ENCODE measurements at regions of chr1 and their contacts with region 1.

Region 1: GRCh38 chr1:7646981-7647901 is 123.9 kb upstream of the VAMP3 start:
- DNase-seq: peak; percentile 94
- H3K4me3 ChIP-seq: no peak overlapping the region; a peak in 1 of 4 replicates
- H3K27ac ChIP-seq: peak overlapping the region in 1 of 2 experiments; percentile 85; a peak in 2 of 4 replicates
- H3K4me1 ChIP-seq: peaks cover 0 to 39% of the 10 kb centered on the region in 2 experiments; a peak in 1 of 4 replicates
- H3K27me3 ChIP-seq: no peaks in the 10 kb centered on the region
- CTCF ChIP-seq: peak; percentile 88
- EP300 ChIP-seq: no peak
- RAD21 ChIP-seq: peak; percentile 95

Region 2: DNA sequence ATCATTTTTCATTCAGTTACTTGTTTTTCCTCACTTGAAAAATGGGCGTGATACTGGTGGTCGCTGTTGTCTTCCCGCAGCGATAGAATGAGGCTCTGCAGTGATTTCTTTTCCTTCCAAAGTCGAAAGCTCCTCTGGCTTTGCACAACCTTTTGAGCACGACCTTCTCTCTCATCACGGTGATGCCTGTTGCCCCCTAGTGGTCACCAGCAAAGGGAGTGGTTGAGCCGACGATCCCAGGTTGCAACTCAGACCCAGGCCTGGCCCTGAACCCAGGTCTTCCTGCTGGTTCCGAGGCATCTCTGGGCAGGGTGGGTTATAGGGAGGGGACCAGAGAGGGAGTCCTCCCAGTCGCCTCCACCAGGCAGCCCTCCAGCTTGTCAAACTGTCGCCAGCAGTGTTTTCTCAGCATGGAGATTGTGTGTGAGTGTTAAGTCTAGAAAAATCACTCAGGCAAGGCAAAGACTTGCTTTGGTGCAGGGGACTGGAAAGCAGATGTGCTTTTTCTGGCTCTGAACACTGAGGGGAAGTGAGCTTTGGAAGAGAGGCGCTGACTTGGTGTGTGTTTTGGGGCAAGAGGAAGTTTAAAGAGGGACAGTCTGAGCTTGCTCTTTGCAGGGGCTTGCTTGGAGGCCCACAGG is 576.7 kb before region 1 on chr1:
- CTCF ChIA-PET with region 1: interaction called, 22 read pairs
- POLR2A ChIA-PET with region 1: no interaction called
- DNase-seq: peak; percentile 87
- H3K4me3 ChIP-seq: no peak overlapping the region; a peak in 1 of 4 replicates
- H3K27ac ChIP-seq: no peak overlapping the region
- H3K4me1 ChIP-seq: no peaks in the 10 kb centered on the region; a peak in 1 of 4 replicates
- H3K27me3 ChIP-seq: no peaks in the 10 kb centered on the region
- CTCF ChIP-seq: peak; percentile 72
- EP300 ChIP-seq: no peak
- RAD21 ChIP-seq: peak; percentile 84

Region 3: GRCh38 chr1:7485086-7485780 is 162.0 kb before region 1 on chr1:
- CTCF ChIA-PET with region 1: interaction called, 11 read pairs
- POLR2A ChIA-PET with region 1: no interaction called
- DNase-seq: no peak
- H3K4me3 ChIP-seq: no peak overlapping the region
- H3K27ac ChIP-seq: peak overlapping the region in 1 of 2 experiments; percentile 47; a peak in 1 of 4 replicates
- H3K4me1 ChIP-seq: peaks cover 0 to 50% of the 10 kb centered on the region in 2 experiments; a peak in 1 of 4 replicates
- H3K27me3 ChIP-seq: no peaks in the 10 kb centered on the region
- CTCF ChIP-seq: no peak
- EP300 ChIP-seq: no peak
- RAD21 ChIP-seq: no peak

Region 4: GRCh38 chr1:7554385-7555235 is 92.6 kb before region 1 on chr1:
- CTCF ChIA-PET with region 1: interaction called, 18 read pairs
- POLR2A ChIA-PET with region 1: interaction called, 5 read pairs
- DNase-seq: no peak
- H3K4me3 ChIP-seq: no peak overlapping the region
- H3K27ac ChIP-seq: peak overlapping the region in 1 of 2 experiments; percentile 100; a peak in 2 of 4 replicates
- H3K4me1 ChIP-seq: peaks cover 6 to 83% of the 10 kb centered on the region in 2 experiments; a peak in 3 of 4 replicates
- H3K27me3 ChIP-seq: no peaks in the 10 kb centered on the region
- CTCF ChIP-seq: no peak
- EP300 ChIP-seq: no peak
- RAD21 ChIP-seq: no peak

Region 5: DNA sequence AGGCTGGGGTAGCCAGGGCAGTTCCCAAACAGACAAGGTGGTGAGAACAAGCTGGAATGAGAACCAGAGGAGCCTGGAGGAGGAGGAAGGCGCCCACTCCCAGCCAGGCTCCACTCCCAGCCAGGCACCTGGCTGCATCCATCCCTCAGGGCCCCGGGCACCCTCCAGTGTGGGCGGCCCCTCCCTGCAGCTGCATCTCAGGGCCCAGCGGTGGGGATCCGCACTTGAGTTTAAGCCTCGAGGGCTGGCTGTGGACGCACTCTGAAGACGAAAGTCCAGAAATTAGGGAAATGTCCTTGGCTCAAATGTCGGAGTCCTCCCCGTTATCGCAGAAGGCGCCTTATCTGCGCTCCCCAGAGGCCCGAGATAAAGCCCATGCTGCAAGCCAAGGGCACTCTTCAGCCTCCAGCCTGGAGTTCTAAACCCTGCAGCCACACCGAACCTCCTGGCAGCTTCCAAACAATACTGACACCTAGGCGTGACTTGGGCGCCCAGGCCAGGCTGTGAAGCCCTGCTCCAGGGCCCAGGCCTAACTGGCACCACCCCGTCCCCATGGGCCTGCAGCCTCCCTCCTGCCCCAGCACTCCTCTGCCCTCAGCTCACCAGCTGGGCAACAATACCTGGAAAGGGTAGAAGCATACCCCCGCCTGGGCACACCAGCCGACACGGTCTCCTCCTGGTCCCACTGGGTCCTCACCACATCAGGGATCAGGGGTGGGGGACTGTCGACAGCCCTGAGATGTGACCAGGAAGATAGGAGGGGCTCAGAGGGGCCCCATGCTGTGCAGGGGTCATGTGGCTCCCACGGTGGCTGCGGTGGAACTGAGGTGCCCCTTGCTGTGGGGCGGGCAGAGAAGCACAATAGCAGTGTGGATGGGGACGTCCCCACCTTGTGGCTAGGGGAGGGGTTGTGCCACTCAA is 61.0 kb before region 1 on chr1:
- CTCF ChIA-PET with region 1: interaction called, 20 read pairs
- POLR2A ChIA-PET with region 1: interaction called, 5 read pairs
- DNase-seq: peak; percentile 61
- H3K4me3 ChIP-seq: no peak overlapping the region; a peak in 1 of 4 replicates
- H3K27ac ChIP-seq: peak overlapping the region in 1 of 2 experiments; percentile 99; a peak in 2 of 4 replicates
- H3K4me1 ChIP-seq: peaks cover 0 to 98% of the 10 kb centered on the region in 2 experiments; a peak in 2 of 4 replicates
- H3K27me3 ChIP-seq: no peaks in the 10 kb centered on the region
- CTCF ChIP-seq: no peak
- EP300 ChIP-seq: peak in 1 of 2 experiments; percentile 33; a peak in 1 of 4 replicates
- RAD21 ChIP-seq: no peak

Region 6: DNA sequence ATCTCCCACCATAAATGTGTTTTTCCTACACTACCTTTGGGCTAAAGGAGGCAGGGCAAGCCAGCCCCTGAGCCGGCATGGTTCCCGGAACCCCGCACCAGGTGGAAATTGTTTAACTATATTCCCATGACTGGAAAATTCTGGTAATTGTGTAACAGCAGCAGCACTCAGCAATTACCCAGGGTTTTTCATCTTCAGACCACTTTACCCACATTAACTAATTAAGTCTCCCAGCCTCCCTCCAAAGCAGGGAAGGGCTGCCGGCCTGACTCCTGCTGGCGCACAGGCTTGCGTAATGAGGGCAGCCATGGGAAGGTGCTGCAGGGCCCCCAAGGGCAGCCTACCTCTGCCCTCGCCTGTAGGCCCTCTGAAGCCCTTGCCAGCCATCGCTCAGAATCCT is 16.9 kb before region 1 on chr1:
- CTCF ChIA-PET with region 1: interaction called, 12 read pairs
- POLR2A ChIA-PET with region 1: interaction called, 4 read pairs
- DNase-seq: peak; percentile 90
- H3K4me3 ChIP-seq: no peak overlapping the region
- H3K27ac ChIP-seq: peak overlapping the region; percentile 32 to 100; a peak in 3 of 4 replicates
- H3K4me1 ChIP-seq: peaks cover 0 to 89% of the 10 kb centered on the region in 2 experiments; a peak in 2 of 4 replicates
- H3K27me3 ChIP-seq: peaks cover 6% of the 10 kb centered on the region; the same call in 1 of the 2 replicates
- CTCF ChIP-seq: no peak
- EP300 ChIP-seq: peak in 1 of 2 experiments; percentile 93; a peak in 2 of 4 replicates
- RAD21 ChIP-seq: peak; percentile 41

Region 7: DNA sequence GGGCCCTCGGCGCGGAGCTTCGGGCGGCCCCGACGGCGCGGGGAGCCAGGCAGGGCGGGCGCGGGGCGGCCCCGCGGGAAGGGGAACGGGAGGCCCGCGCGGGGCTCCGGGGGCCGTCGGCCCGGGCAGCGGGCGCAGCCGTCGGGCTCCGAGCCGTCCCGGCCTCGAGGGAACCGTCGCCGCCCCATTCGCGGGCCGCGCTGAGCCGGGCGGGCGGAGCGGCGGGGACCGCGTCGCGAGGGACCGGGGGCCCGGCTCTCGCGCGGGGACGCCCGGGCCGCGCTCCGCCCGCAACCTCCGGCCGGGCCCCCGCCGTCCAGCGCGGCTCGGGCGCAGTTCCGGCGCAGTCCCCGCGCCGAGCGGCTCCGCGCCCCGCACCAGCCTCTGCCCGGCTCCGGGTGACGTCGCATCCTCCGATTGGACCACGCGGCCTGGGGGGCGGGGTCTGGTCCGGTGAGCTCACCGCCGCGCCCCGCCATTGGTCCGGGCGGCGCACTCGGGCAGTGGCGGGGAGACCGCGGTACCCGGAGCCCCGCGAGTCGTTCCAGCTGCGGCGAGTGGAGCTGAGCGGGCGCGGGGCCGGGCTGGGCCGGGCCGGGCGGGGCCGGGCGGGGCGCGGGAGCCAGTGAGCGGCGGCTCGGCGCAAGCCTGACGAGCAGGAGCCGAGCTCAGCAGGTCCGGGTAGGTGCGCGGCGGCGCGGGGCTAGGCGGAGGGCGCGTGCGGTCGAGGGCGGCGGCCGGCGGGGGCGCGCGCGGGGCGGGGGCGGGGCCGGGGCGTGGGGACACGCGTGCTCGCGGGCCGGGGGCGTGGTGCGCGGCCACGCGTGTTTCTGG is 57.2 kb after region 1 on chr1:
- CTCF ChIA-PET with region 1: no interaction called
- POLR2A ChIA-PET with region 1: no interaction called
- DNase-seq: peak; percentile 100
- H3K4me3 ChIP-seq: peak overlapping the region in 1 of 2 experiments; percentile 64; a peak in 2 of 4 replicates
- H3K27ac ChIP-seq: peak overlapping the region in 1 of 2 experiments; percentile 74; a peak in 1 of 4 replicates
- H3K4me1 ChIP-seq: peaks cover 0 to 8% of the 10 kb centered on the region in 2 experiments; a peak in 1 of 4 replicates
- H3K27me3 ChIP-seq: peaks cover 6% of the 10 kb centered on the region; the same call in 1 of the 2 replicates
- CTCF ChIP-seq: no peak
- EP300 ChIP-seq: no peak
- RAD21 ChIP-seq: no peak

Measured in SK-N-SH (cell line).